Aorta (tissue), 5 donors: ENCODE measurements at regions of chr5 and their contacts with region 1.

Region 1: DNA sequence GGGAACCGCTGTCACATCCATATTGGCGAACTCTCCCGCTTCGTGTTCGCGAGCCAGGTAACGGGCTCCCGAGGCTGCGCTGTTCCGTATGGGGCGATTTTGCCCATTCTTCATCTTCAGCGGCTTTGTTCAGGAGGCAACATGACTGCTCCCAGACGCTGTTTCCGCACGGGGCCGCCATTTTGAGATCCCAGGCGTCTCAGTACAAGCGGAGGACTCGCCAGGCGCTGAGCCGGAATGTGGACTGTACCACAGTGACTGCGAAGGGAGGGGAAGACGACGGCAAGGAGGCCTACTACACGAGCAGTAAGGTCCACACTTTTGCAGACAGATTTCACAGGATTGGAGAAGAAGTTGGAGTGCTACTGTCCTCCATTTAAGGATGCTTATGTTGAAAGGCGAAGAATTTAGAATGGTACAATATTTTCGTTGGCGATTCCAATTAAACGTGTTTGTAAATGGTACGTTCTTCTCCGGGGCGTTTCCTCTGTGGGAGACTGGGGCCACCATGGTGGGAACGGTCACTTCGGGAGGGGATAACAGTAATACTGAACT is 41.6 kb upstream of the ZNF300 start:
- DNase-seq: peak; percentile 90 to 94
- ATAC-seq: peak; percentile 95
- H3K4me3 ChIP-seq: peak overlapping the region; percentile 36 to 72
- H3K27ac ChIP-seq: peak overlapping the region; percentile 59 to 60
- H3K4me1 ChIP-seq: no peaks in the 10 kb centered on the region
- H3K27me3 ChIP-seq: no peaks in the 10 kb centered on the region

Region 2: DNA sequence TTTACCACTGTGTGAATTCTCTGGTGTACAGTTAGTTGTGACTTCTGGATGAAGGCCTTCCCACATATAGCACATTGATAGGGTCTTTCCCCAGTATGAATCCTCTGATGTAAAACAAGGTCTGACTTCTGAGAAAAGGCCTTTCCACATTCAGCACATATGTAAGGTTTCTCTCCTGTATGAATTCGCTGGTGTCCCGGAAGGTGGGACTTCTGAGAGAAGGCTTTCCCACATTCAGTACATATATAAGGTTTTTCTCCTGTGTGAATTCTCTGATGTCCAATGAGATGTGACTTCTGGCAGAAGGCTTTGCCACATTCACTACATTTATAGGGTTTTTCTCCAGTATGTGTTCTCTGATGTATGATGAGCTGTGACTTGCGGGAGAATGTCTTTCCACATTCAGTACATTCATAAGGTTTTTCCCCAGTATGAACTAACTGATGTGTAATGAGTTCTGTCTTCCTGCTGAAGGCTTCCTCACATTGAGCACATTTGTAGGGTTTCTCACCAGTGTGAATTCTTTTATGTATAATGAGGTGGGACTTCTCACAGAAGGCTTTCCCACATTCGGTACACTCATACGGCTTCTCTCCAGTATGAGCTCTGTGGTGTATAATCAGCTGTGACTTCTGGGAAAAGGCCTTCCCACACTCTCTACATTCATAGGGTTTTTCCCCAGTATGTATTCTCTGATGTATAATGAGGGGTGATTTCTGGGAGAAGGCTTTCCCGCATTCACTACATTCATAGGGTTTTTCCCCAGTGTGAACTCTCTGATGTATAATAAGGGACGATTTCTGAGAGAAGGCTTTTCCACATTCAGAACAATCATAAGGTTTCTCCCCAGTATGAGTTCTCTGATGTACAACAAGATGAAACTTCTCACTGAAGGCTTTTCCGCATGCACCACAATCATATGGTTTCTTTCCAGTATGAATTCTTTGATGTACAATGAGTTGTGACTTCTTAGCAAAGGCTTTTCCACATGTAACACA is 50.7 kb before region 1 on chr5:
- intact Hi-C with region 1: loop called in 1 of 2 experiments (anchors 10 kb)
- DNase-seq: no peak
- ATAC-seq: no peak
- H3K4me3 ChIP-seq: peak overlapping the region in 1 of 2 donors; percentile 26
- H3K27ac ChIP-seq: no peak overlapping the region
- H3K4me1 ChIP-seq: no peaks in the 10 kb centered on the region
- H3K27me3 ChIP-seq: no peaks in the 10 kb centered on the region

Region 3: GRCh38 chr5:150904479-150905318 is 41.7 kb before region 1 on chr5 and contains the start of gene ZNF300:
- intact Hi-C with region 1: loop called (anchors 2 to 10 kb)
- DNase-seq: peak; percentile 90 to 95
- ATAC-seq: peak; percentile 98
- H3K4me3 ChIP-seq: peak within 1 kb of the TSS; percentile 27 to 58
- H3K27ac ChIP-seq: no peak within 1 kb of the TSS
- H3K4me1 ChIP-seq: no peaks in the 10 kb centered on the region
- H3K27me3 ChIP-seq: no peaks in the 10 kb centered on the region
- total RNA-seq, gene ZNF300: 6.0 to 6.6 TPM

Region 4: DNA sequence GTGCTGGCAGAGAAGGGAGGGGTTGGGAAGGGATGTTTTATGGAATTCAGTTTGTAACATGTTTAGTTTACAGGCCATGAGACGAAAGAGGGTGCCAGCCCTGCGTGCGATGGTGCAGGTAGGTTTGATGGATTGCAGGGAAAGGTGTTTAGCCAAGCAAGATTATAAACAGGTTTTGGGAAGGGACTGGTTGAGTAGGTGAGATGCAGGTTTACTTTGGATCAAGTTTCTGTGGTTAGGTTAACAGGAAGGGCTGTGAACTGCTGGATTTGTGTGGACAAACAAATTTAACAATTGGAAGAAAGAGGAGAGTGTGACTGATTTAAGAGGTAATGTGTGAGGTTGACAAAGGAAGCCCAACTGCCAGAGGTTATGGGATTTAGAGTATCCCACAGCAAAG is 41.3 kb after region 1 on chr5:
- intact Hi-C with region 1: no loop called
- DNase-seq: no peak
- ATAC-seq: no peak
- H3K4me3 ChIP-seq: no peak overlapping the region
- H3K27ac ChIP-seq: no peak overlapping the region
- H3K4me1 ChIP-seq: no peaks in the 10 kb centered on the region
- H3K27me3 ChIP-seq: no peaks in the 10 kb centered on the region